Heart right ventricle (tissue), 16 donors: ENCODE measurements at regions of chr9 and their contacts with region 1.

Region 1: DNA sequence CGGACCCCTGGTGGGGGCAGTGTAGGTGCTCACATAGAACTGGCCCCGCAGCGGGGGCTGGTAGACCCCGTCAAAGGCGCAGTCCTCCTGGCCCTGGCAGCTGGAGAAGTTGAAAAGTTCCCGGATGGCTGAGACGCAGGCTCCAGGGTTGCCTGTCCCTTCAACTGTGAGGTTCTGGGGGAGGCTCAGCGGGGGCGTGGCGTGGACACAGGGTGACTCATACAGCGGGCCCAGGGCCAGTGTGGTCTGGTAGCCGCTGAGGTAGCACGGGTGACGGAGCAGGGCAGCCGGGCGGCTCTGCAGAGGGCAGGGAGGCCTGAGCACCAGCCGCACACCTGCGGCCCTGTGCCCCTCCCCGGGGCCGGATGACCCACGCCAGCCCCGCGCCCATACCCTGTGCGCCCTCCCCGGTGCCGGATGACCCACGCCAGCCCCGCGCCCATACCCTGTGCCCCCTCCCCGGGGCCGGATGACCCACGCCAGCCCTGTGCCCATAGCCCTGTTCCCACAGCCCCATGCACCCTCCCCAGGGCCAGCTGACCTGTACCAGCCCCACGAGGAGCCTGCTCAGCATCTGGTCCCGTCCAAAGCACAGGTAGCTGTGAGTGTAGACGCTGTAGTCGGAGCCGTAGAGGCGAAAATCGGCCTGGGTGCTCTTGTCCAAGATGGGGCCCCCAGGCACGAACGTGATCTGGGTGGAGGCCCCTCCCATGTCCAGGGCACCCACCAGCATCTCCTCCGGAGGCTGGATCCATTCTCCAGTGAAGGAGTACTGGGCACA is 5.0 kb downstream of the ENTPD8 start:
- DNase-seq: peak in 1 of 2 donors; percentile 50
- ATAC-seq: peak in 7 of 8 donors; percentile 10 to 68 (median 38)
- H3K4me3 ChIP-seq: no peak overlapping the region
- H3K27ac ChIP-seq: no peak overlapping the region
- H3K4me1 ChIP-seq: peaks cover 0 to 6% (median under 1%) of the 10 kb centered on the region in 9 donors
- H3K27me3 ChIP-seq: peaks cover 0 to 10% (median 1%) of the 10 kb centered on the region in 7 donors
- CTCF ChIP-seq: no peak

Region 2: DNA sequence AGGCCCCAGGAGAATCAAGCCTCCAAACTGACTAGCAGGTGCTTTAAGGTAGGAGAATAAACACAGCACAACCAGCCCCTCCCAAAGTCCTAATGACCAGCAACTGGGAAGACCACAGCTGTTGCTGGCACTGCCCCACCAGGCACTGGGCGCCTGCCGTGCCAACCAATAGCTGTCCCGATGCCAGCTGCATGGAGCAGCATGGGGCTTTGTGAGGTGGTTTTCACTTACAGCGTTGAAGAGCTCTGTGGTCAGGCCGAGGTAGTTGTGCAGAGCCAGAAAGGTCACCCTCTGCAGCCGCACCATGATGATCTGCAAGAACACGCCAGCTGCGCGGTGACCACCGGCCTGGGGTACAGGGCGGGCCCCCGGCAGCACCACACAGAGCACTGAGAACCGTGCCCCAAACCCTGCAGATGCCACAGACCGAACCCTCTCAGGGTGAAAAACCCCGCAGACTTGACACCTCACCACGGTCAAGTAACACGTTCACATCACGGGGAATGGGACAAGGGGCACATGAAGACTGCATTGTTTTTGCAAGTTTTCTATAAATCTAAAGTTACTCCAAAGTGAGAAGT is 85.3 kb after region 1 on chr9:
- intact Hi-C with region 1: loop called in 2 of 10 experiments (anchors 5 to 10 kb)
- DNase-seq: no peak
- ATAC-seq: no peak
- H3K4me3 ChIP-seq: no peak overlapping the region
- H3K27ac ChIP-seq: no peak overlapping the region
- H3K4me1 ChIP-seq: peaks cover 0 to 4% (median 0%) of the 10 kb centered on the region in 9 donors
- H3K27me3 ChIP-seq: no peaks in the 10 kb centered on the region
- CTCF ChIP-seq: no peak